A549 (cell line): ENCODE measurements at regions of chr12 and their contacts with region 1.

Region 1: GRCh38 chr12:49322708-49323523 is at the start of gene TROAP:
- DNase-seq: peak; percentile 98 to 99
- ATAC-seq: peak; percentile 99 to 100
- H3K4me3 ChIP-seq: peak within 1 kb of the TSS; percentile 62
- H3K27ac ChIP-seq: peak within 1 kb of the TSS; percentile 80 to 91
- H3K4me1 ChIP-seq: peaks cover 12% of the 10 kb centered on the region; the same call in 2 of the 3 replicates
- CTCF ChIP-seq: no peak
- EP300 ChIP-seq: no peak
- POLR2A ChIP-seq: peak; percentile 94
- RAD21 ChIP-seq: no peak
- polyA plus RNA-seq, gene TROAP: 50.0 and 56.4 TPM in 2 replicates

Region 2: GRCh38 chr12:49264738-49265515 is 58.0 kb before region 1 on chr12 and contains the start of gene TUBA1C:
- CTCF ChIA-PET with region 1: interaction called, 5 read pairs
- POLR2A ChIA-PET with region 1: interaction called, 14 read pairs
- DNase-seq: peak; percentile 91 to 97
- ATAC-seq: peak; percentile 80 to 83
- H3K4me3 ChIP-seq: peak within 1 kb of the TSS; percentile 71
- H3K27ac ChIP-seq: peak within 1 kb of the TSS; percentile 94 to 100
- H3K4me1 ChIP-seq: peaks cover 36% of the 10 kb centered on the region
- CTCF ChIP-seq: no peak
- EP300 ChIP-seq: no peak
- POLR2A ChIP-seq: peak; percentile 99
- RAD21 ChIP-seq: no peak
- polyA plus RNA-seq, gene TUBA1C: 1,183 and 1,488 TPM in 2 replicates

Region 3: DNA sequence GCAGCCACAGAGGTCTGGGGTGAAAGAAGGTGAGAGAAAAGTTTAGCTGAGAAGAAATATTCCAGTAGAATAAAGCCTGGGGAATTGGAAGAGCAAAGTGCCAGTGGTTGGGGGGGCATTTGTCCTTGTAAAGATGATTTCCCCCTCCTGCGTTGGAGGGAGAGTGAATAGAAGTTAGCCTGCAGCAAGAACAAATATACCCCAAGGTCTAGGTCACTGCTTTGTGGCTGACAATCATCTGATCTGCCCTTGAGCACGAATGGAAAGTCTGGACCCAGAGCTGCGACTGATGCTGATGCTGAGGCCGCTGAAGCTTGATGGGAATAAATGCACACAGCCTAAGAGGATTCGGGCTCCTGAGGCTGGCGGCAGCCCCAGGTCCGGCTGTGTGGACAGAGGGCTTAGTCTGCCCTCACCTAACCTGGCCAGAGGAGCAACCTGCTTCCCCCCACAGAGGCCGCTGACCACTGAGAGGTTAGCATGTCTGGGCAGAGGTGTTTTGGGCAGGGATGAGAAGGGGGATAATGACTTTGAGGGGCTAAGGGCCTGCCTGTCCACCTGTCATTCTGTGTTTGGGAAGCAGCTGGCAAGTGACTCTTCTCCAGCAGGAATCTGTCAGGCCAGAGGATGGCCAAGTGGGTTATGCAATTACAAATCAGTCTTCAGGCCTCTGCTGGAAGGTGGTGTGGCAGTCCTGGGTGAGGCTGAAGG is 46.5 kb before region 1 on chr12:
- CTCF ChIA-PET with region 1: no interaction called
- POLR2A ChIA-PET with region 1: no interaction called
- DNase-seq: no peak
- ATAC-seq: peak; percentile 31 to 37
- H3K4me3 ChIP-seq: no peak overlapping the region
- H3K27ac ChIP-seq: no peak overlapping the region
- H3K4me1 ChIP-seq: no peaks in the 10 kb centered on the region; the same call in 2 of the 3 replicates
- CTCF ChIP-seq: no peak
- EP300 ChIP-seq: no peak
- POLR2A ChIP-seq: no peak
- RAD21 ChIP-seq: no peak

Region 4: GRCh38 chr12:49296034-49296835 is 26.7 kb before region 1 on chr12:
- CTCF ChIA-PET with region 1: interaction called, 61 read pairs
- POLR2A ChIA-PET with region 1: interaction called, 30 read pairs
- DNase-seq: peak; percentile 69 to 88
- ATAC-seq: peak; percentile 60 to 83
- H3K4me3 ChIP-seq: peak overlapping the region; percentile 52
- H3K27ac ChIP-seq: peak overlapping the region; percentile 50 to 80; a peak in 5 of 6 replicates
- H3K4me1 ChIP-seq: peaks cover 18% of the 10 kb centered on the region; the same call in 2 of the 3 replicates
- CTCF ChIP-seq: peak; percentile 81
- EP300 ChIP-seq: no peak
- POLR2A ChIP-seq: no peak
- RAD21 ChIP-seq: peak in 1 of 2 experiments; percentile 34; a peak in 2 of 5 replicates

Region 5: DNA sequence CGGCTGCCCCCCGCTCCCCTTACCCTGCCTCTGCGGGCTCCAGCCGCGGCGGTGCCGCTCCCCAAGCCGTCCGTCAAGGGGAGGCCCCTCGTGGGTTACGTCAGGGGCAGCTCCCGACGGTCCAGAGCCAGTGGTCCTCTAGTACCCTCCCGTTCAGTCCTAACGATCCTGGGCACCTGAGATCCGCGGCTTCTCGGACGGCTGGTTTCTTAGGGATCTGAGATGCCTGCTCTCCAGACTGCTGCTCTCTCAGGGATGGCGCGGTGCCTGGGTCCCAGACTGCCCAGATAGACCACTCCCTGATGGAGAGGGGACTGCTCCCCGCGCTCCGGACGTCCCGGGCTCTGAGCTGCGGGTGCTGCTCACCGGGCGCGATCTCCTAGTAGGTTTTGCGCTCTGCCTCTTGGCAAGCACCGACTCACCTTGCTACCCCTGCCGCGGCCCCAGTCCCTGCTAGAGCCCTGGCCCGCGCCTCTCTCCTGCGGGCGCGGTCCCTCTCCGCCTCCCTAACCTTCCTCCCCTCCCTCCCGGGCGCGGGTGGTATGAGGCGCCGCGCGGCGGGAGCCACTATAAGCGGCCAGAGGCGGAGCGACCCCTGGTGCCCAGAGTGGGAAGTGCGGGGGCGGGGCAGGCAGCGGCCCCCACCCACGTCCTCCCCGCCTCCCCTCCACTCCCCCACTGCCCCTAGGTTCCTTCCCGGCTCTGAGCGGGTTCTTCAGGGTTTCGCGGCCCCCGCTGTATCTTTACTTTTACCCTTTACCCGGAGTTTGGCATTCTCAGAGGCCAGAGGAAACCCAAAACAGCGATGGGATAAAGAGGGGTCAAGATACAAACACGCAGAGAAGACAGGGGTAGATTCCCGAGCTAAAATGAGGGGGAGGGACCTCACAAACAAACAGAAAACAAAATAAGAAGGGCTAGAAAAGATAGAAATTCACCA is 14.0 kb after region 1 on chr12 and contains the start of gene C1QL4:
- CTCF ChIA-PET with region 1: interaction called, 66 read pairs
- POLR2A ChIA-PET with region 1: interaction called, 17 read pairs
- DNase-seq: peak; percentile 75 to 84
- ATAC-seq: peak; percentile 78 to 88
- H3K4me3 ChIP-seq: peak within 1 kb of the TSS; percentile 64
- H3K27ac ChIP-seq: peak within 1 kb of the TSS; percentile 71 to 82
- H3K4me1 ChIP-seq: peaks cover 12% of the 10 kb centered on the region; the same call in 2 of the 3 replicates
- CTCF ChIP-seq: peak; percentile 95
- EP300 ChIP-seq: no peak
- POLR2A ChIP-seq: peak; percentile 62
- RAD21 ChIP-seq: peak; percentile 28 to 53
- polyA plus RNA-seq, gene C1QL4: 0.99 and 1.5 TPM in 2 replicates

Region 6: DNA sequence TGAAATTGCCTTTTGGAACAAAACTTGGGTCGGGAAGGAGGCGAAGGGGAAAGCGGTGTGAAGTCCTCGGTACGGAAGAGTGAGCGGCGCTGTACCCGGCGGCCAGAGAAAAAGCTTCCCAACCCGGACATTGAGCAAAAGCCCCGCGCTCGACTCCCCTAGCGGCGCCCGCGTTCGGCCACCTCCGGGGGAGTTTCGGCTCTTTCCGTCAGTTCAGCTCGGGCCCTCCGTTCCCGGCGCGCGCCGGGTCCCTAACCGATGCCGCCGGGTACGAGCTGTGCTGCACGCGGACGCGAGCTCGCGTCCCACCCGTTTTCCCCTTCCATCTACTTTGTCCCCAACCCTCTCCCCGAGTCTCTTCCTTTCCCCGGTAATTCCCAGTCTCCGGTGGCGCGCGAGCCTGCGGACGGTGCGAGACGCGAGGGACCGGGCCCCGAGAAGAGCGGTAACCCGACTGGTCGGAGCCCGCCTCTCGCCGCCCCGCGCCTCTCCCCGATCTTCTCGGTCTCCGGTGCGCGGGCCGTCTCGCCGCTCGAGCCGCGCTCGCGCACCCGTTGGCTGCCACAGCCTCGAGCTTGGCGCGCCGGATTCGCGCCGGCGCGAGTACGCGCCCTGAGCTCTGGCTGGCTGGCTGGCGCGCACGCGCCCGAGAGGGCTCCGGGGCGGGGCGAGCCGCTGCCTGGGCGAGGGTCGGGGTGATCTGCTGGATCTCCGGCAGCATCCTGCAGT is 43.9 kb after region 1 on chr12:
- CTCF ChIA-PET with region 1: no interaction called
- POLR2A ChIA-PET with region 1: interaction called, 11 read pairs
- DNase-seq: peak; percentile 95 to 97
- ATAC-seq: peak; percentile 87 to 90
- H3K4me3 ChIP-seq: peak overlapping the region; percentile 86
- H3K27ac ChIP-seq: peak overlapping the region; percentile 95 to 96
- H3K4me1 ChIP-seq: peaks cover 36% of the 10 kb centered on the region
- CTCF ChIP-seq: no peak
- EP300 ChIP-seq: no peak
- POLR2A ChIP-seq: peak; percentile 65
- RAD21 ChIP-seq: no peak

Region 7: DNA sequence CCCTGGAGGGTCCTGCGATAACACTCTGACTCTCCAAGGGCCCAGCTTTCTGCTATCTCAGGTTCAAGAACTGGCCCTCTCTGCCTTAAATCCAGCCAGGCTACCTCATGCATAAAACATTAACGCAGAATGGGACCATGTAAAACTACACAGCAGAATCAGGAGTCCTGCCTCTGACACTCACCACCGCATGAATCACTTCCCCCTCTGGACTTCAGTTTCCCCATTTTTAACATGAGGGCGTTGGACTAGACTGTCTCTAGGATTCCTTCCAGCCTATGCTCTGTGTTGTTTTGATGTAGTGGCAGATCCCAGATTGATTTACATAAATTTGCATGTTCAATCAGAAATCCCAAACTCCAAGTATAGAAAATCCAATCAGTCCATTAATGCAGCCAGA is 502.0 kb after region 1 on chr12:
- CTCF ChIA-PET with region 1: no interaction called
- POLR2A ChIA-PET with region 1: no interaction called
- DNase-seq: no peak
- ATAC-seq: no peak
- H3K4me3 ChIP-seq: no peak overlapping the region
- H3K27ac ChIP-seq: no peak overlapping the region
- H3K4me1 ChIP-seq: peaks cover 16% of the 10 kb centered on the region; the same call in 2 of the 3 replicates
- CTCF ChIP-seq: no peak
- EP300 ChIP-seq: no peak
- POLR2A ChIP-seq: no peak
- RAD21 ChIP-seq: no peak